OCI-LY7 (cell line): ENCODE measurements at regions of chr6 and their contacts with region 1.

Region 1: GRCh38 chr6:107822176-107823046 is 1.7 kb downstream of the SCML4 start:
- DNase-seq: peak; percentile 55
- H3K4me3 ChIP-seq: peak overlapping the region; percentile 60
- H3K27ac ChIP-seq: no peak overlapping the region
- H3K4me1 ChIP-seq: peaks cover 28% of the 10 kb centered on the region
- CTCF ChIP-seq: no peak

Region 2: GRCh38 chr6:107695061-107695720 is 127.2 kb before region 1 on chr6:
- CTCF ChIA-PET with region 1: no interaction called
- POLR2A ChIA-PET with region 1: interaction called, 13 read pairs
- intact Hi-C with region 1: no loop called
- DNase-seq: no peak
- H3K4me3 ChIP-seq: no peak overlapping the region
- H3K27ac ChIP-seq: no peak overlapping the region
- H3K4me1 ChIP-seq: no peaks in the 10 kb centered on the region
- CTCF ChIP-seq: no peak